Transverse colon (tissue), 4 donors: ENCODE measurements at regions of chr15 and their contacts with region 1.

Region 1: GRCh38 chr15:86555939-86556338 is 476.3 kb downstream of the AGBL1 start:
- DNase-seq: no peak
- H3K4me3 ChIP-seq: no peak overlapping the region
- H3K27ac ChIP-seq: no peak overlapping the region
- H3K4me1 ChIP-seq: no peaks in the 10 kb centered on the region
- H3K27me3 ChIP-seq: no peaks in the 10 kb centered on the region
- CTCF ChIP-seq: no peak
- EP300 ChIP-seq: no peak
- POLR2A ChIP-seq: no peak

Region 2: GRCh38 chr15:86572368-86572841 is 16.5 kb after region 1 on chr15:
- in situ Hi-C with region 1: no loop called
- intact Hi-C with region 1: no loop called
- DNase-seq: no peak
- H3K4me3 ChIP-seq: no peak overlapping the region
- H3K27ac ChIP-seq: no peak overlapping the region
- H3K4me1 ChIP-seq: no peaks in the 10 kb centered on the region
- H3K27me3 ChIP-seq: no peaks in the 10 kb centered on the region
- CTCF ChIP-seq: no peak
- EP300 ChIP-seq: no peak
- POLR2A ChIP-seq: no peak

Region 3: DNA sequence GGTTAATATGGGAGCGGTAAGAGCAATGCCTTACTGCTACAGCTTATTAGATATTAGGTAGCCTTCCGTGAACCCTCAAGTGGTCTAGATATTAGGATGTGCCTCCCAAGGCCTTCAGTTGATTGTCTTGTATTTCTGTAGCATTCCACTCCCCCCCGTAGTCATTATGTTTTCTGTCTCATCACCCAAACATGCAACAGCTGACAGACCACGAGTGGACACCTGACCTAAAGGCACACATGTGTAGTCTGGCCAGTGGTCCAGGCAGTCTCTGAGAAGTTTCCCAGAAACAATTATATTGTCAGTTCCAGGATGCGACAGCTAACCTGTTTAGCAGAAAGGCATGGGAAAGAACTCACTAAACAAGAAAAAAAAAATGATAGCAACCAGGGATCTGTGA is 524.6 kb after region 1 on chr15:
- in situ Hi-C with region 1: loop called in 1 of 4 experiments (anchors 25 kb)
- intact Hi-C with region 1: no loop called
- DNase-seq: no peak
- H3K4me3 ChIP-seq: no peak overlapping the region
- H3K27ac ChIP-seq: no peak overlapping the region
- H3K4me1 ChIP-seq: no peaks in the 10 kb centered on the region
- H3K27me3 ChIP-seq: no peaks in the 10 kb centered on the region
- CTCF ChIP-seq: no peak
- EP300 ChIP-seq: no peak
- POLR2A ChIP-seq: no peak